Colonic mucosa (tissue), 4 donors: ENCODE measurements at regions of chr1 and their contacts with region 1.

Region 1: GRCh38 chr1:3856908-3857790 is at the starts of genes CEP104 and DFFB:
- DNase-seq: peak; percentile 96
- H3K4me3 ChIP-seq: peak within 1 kb of the TSS; percentile 90
- H3K27ac ChIP-seq: peak within 1 kb of the TSS; percentile 63
- H3K4me1 ChIP-seq: peaks cover 7% of the 10 kb centered on the region
- H3K27me3 ChIP-seq: no peaks in the 10 kb centered on the region
- CTCF ChIP-seq: peak; percentile 29
- total RNA-seq, gene CEP104: 41.1 to 52.7 TPM
- total RNA-seq, gene DFFB: 4.5 to 10.7 TPM

Region 2: GRCh38 chr1:3899754-3900118 is 42.6 kb after region 1 on chr1:
- intact Hi-C with region 1: loop called (anchors 5 kb)
- DNase-seq: no peak
- H3K4me3 ChIP-seq: peak overlapping the region; percentile 90
- H3K27ac ChIP-seq: peak overlapping the region; percentile 97
- H3K4me1 ChIP-seq: no peaks in the 10 kb centered on the region
- H3K27me3 ChIP-seq: no peaks in the 10 kb centered on the region
- CTCF ChIP-seq: no peak